Motor neuron (in vitro differentiated cells): ENCODE measurements at regions of chr3 and their contacts with region 1.

Region 1: DNA sequence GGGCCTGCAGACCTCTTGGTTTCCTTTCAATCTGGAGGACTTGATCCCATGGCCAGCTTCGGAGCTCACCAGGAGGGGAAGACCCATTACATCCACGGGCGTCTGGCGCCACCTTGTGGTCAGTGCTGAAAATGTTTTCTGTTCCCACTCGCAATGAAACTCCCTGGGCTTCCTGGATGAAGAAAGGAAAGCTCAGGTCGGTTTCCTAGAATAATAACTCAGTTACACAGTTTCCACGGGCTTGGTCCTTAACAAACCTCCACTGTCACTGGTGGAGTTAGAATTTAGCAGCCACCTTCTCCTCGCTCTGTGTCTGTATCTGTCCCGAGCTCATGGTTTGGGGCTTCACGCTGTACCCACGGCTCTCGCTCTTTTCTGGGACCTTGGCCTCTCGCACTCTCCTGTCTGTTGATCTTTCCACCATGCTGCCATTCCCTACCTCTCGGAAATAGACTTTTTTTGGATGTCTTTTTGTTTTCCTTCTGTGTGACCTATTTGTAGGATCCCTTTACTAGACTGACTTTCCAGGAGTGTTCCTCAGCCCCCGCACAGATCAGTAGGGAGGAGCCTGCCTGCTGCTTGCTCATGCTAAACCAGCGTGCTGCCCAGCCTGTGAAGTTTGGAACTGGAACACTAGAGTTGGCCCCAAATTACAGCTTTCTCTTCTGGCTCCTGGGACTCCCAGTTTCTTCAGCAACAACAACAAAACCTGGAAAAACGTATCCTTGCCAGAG is 56.3 kb downstream of the IL20RB start:
- ATAC-seq: peak; percentile 92 to 99 (median 98)
- H3K4me3 ChIP-seq: peak overlapping the region in 1 of 5 donors; percentile 8
- H3K27ac ChIP-seq: no peak overlapping the region
- H3K4me1 ChIP-seq: no peaks in the 10 kb centered on the region

Region 2: DNA sequence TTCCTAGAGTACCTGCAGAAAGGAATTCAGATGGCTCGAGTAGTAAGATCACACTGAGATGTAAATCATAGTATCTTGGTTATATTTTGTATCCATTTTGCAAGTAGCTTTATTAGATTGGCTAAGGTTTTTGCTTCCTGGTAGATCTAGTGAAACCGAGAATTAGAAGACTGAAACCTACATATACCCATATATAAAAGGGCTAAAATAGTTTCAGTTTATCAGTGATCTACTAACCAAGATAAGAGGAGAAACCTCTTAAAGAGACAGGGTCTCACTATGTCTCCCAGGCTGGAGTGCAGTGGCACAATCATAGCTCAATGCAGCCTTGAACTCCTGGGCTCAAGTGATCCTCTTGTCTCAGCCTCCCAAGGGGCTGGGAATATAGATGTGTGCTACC is 628.7 kb before region 1 on chr3:
- in situ Hi-C with region 1: loop called in 1 of 9 experiments (anchors 25 kb)
- ATAC-seq: no peak
- H3K4me3 ChIP-seq: no peak overlapping the region
- H3K27ac ChIP-seq: no peak overlapping the region
- H3K4me1 ChIP-seq: no peaks in the 10 kb centered on the region

Region 3: GRCh38 chr3:136752422-136753325 is 261.4 kb before region 1 on chr3:
- in situ Hi-C with region 1: loop called in 2 of 9 experiments (anchors 25 kb)
- ATAC-seq: peak; percentile 82 to 90 (median 88)
- H3K4me3 ChIP-seq: peak overlapping the region; percentile 62 to 87 (median 78)
- H3K27ac ChIP-seq: peak overlapping the region; percentile 97 to 99
- H3K4me1 ChIP-seq: peaks cover 19 to 26% of the 10 kb centered on the region in 2 donors

Region 4: DNA sequence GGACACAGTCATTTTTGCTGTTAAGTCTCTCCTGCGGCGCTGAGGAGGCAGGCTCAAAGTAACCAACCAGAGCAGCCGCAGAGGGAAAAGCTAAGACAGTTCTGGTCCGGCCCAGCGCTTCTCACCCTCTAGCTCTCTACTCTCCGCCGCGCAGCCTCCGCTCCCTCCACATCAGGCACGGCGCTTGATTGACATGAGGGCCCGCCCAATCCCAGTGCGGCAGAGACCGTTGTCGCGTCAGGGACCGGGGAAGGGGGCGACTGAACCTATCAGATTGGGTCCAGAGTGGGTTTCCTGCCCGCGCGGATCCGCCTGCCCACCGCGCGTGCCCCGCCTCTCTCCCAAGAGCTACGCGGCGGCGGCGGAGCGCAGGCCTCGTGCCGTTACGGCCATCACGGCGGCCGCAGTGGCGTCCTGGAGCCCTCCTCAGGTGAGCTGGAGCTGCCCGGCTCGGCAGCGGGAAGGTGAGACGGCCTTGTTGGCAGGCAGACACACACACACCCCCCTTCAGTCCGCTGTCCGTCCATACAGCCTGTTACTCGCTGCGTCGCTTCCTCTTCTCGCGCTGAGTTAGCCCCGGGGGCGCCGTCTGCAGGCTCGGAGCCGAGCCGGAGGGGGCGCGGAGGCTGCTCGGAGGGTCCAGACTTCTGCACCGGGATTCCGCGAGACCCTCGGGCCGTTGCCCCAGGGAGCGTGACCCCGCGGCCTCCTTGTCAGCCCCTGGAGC is 152.1 kb before region 1 on chr3 and contains the start of gene NCK1:
- in situ Hi-C with region 1: loop called in 1 of 9 experiments (anchors 25 kb)
- ATAC-seq: peak; percentile 95 to 98 (median 97)
- H3K4me3 ChIP-seq: peak within 1 kb of the TSS; percentile 76 to 95 (median 83)
- H3K27ac ChIP-seq: peak within 1 kb of the TSS; percentile 95 to 98
- H3K4me1 ChIP-seq: peaks cover 5 to 11% of the 10 kb centered on the region in 2 donors
- total RNA-seq, gene NCK1: 22.7 to 56.4 (median 33.0) TPM